ENCODE measurements at regions of chr17 and their contacts with region 1.

Region 1: GRCh38 chr17:5667871-5668270 is 83.6 kb upstream of the NLRP1 start:
- H3K4me3 Mint-ChIP-seq: no peak overlapping the region
- H3K27ac Mint-ChIP-seq: no peak overlapping the region
- H3K4me1 Mint-ChIP-seq: peaks cover 7% of the 10 kb centered on the region
- H3K27me3 Mint-ChIP-seq: peaks cover 17% of the 10 kb centered on the region

Region 2: GRCh38 chr17:5592382-5592781 is 75.5 kb before region 1 on chr17:
- intact Hi-C with region 1: loop called (anchors 5 kb)
- H3K4me3 Mint-ChIP-seq: no peak overlapping the region
- H3K27ac Mint-ChIP-seq: no peak overlapping the region
- H3K4me1 Mint-ChIP-seq: peaks cover 2% of the 10 kb centered on the region
- H3K27me3 Mint-ChIP-seq: peaks cover 57% of the 10 kb centered on the region

Region 3: GRCh38 chr17:5730373-5730772 is 62.5 kb after region 1 on chr17:
- intact Hi-C with region 1: no loop called
- H3K4me3 Mint-ChIP-seq: no peak overlapping the region
- H3K27ac Mint-ChIP-seq: no peak overlapping the region
- H3K4me1 Mint-ChIP-seq: no peaks in the 10 kb centered on the region
- H3K27me3 Mint-ChIP-seq: peaks cover 20% of the 10 kb centered on the region

Region 4: GRCh38 chr17:5800675-5801074 is 132.8 kb after region 1 on chr17:
- intact Hi-C with region 1: no loop called
- H3K4me3 Mint-ChIP-seq: no peak overlapping the region
- H3K27ac Mint-ChIP-seq: no peak overlapping the region
- H3K4me1 Mint-ChIP-seq: no peaks in the 10 kb centered on the region
- H3K27me3 Mint-ChIP-seq: peaks cover 21% of the 10 kb centered on the region